HEK293 (cell line): ENCODE measurements at regions of chr20 and their contacts with region 1.

Region 1: GRCh38 chr20:35303735-35304491 is 11.7 kb upstream of the FAM83C start:
- H3K4me3 ChIP-seq: no peak overlapping the region
- H3K27ac ChIP-seq: no peak overlapping the region
- H3K4me1 ChIP-seq: no peaks in the 10 kb centered on the region; the same call in 1 of the 2 replicates
- CTCF ChIP-seq: peak; percentile 86

Region 2: GRCh38 chr20:34988191-34988540 is 315.7 kb before region 1 on chr20:
- CTCF ChIA-PET with region 1: no interaction called
- POLR2A ChIA-PET with region 1: no interaction called
- H3K4me3 ChIP-seq: no peak overlapping the region
- H3K27ac ChIP-seq: no peak overlapping the region
- H3K4me1 ChIP-seq: no peaks in the 10 kb centered on the region
- CTCF ChIP-seq: no peak

Region 3: DNA sequence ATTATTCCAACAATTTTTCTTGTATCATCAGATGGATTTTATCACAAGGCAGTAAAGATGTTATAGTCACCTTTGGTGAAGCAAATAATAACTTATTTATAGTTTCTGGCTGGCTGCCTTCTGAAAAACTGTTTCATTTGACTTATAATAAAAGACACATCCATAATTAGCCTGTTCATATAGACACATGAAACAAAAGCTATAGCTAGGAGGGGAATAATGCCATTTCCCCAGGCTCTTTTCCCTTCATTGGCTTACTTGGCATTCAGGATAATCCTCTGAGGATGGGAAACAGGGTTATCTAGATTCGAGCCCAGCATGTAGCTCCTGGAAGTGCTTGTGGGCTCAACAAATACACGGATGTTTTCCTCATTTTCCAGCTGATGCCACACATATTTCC is 59.9 kb before region 1 on chr20:
- CTCF ChIA-PET with region 1: no interaction called
- POLR2A ChIA-PET with region 1: no interaction called
- H3K4me3 ChIP-seq: no peak overlapping the region
- H3K27ac ChIP-seq: no peak overlapping the region
- H3K4me1 ChIP-seq: no peaks in the 10 kb centered on the region
- CTCF ChIP-seq: no peak

Region 4: DNA sequence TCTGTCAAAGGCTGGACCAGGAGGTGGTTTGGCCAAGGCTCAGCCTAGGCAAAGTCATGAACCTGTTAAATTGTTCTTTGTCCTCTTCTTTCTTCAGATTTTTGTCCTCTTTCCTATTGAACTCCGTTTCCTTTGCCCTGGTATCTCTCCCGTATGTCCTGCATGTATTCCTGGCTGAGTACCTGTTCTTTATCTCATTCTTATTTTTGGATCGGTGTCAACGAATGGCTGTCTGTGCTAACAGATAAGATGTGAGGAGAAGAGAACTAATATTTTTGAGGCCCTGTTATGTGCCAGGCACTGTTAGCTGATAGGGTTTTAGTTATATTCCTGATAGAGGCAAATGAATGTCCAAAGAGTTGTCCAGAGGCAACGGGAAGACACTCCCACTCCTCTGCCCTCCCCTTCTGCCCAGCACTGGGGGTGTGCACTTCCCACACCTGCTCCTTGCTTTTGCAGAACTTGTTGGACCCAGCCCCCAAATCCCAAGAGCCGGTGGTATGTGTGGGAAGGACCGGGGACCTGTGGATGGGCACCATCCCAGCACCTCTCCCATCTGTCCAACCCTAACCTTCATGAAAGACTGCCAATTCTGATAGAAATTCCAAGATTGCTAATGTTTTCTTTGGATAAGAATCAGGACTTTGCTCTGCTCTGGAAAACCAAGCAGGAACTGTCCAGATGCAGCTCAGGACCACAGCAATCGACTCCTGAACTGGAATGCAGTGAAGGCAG is 46.6 kb before region 1 on chr20:
- CTCF ChIA-PET with region 1: no interaction called
- POLR2A ChIA-PET with region 1: no interaction called
- H3K4me3 ChIP-seq: no peak overlapping the region
- H3K27ac ChIP-seq: no peak overlapping the region
- H3K4me1 ChIP-seq: no peaks in the 10 kb centered on the region
- CTCF ChIP-seq: no peak

Region 5: DNA sequence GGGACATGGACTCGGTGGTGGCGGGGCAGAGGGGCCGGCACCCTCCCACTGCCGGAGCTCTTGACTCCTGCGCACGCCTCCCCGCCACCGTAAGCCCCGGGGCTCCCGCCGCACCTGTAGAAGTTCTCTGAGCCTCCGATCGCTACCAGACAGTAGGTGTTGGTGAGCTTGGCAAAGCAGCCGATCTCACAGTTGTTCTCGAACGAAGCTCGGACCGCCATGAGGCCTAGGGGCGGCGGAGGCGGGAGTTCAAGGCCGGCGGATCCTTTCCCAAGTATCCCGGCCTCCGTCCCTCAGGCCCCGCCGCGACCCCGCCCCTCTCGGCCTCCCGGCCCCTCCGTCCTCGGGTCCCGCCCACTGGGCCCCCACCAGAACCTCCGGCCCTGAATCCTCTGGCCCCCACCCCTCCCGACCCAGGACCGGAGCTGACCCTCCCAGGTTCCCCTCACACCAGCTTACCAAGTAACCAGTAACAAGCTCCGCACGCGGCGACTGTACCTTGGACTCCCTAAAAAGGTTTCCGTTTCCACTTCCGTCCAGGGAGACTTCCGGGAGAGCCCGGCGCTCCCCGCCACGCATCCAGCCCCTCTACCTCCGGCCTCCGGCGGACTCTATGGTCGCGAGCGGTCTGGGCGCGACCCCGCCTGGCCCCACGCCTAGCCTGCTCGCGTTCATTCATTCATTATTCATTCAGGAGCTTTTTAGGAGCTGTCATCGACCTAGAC is 19.5 kb before region 1 on chr20 and contains the start of gene EIF6:
- CTCF ChIA-PET with region 1: interaction called, 7 read pairs
- POLR2A ChIA-PET with region 1: interaction called, 15 read pairs
- H3K4me3 ChIP-seq: peak within 1 kb of the TSS; percentile 86
- H3K27ac ChIP-seq: peak within 1 kb of the TSS; percentile 81
- H3K4me1 ChIP-seq: no peaks in the 10 kb centered on the region
- CTCF ChIP-seq: no peak

Region 6: DNA sequence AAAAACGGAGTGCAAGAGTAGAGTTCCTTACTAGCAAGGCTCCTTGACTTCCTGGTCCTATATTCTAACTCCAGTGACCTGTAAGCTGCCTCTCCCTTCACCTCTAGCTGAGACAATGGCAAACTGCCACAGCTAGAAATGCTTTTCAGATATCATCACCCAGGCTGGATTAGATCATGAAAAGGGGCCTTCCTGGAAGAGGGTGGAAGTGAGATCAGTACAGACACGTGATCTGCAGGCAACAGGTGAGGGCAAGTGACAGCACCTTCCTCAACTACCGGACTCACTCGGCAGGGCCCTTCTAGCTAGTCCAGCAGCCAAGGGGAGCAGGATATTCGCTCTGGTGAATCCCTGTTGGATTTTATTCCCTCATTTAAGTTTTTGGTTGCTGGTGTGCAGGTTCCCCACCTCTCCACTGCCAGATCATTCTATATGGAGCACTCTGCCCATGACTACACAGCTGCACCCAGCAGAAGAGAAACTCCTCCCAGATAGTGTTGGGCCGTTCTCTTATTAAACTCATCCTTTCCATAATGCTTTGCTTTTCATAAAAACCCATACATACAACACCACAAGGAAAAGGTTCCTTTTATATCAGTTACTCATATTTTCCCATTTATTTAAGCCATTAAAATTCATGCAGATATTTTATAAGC is 14.7 kb after region 1 on chr20:
- CTCF ChIA-PET with region 1: interaction called, 66 read pairs
- POLR2A ChIA-PET with region 1: interaction called, 14 read pairs
- H3K4me3 ChIP-seq: peak overlapping the region; percentile 15
- H3K27ac ChIP-seq: peak overlapping the region; percentile 65
- H3K4me1 ChIP-seq: peaks cover 34% of the 10 kb centered on the region
- CTCF ChIP-seq: no peak

Region 7: GRCh38 chr20:35447082-35447789 is 143.3 kb after region 1 on chr20:
- CTCF ChIA-PET with region 1: interaction called, 132 read pairs
- POLR2A ChIA-PET with region 1: no interaction called
- H3K4me3 ChIP-seq: no peak overlapping the region
- H3K27ac ChIP-seq: no peak overlapping the region
- H3K4me1 ChIP-seq: no peaks in the 10 kb centered on the region
- CTCF ChIP-seq: peak; percentile 72